Activated CD4-positive, alpha-beta T cell treated with anti-CD3 and anti-CD28 coated beads for 36 hours (primary cell): ENCODE measurements at regions of chr15 and their contacts with region 1.

Region 1: GRCh38 chr15:23411841-23412240 is 35.2 kb downstream of the GOLGA6L2 start:
- DNase-seq: no peak
- ATAC-seq: no peak
- H3K4me3 Mint-ChIP-seq: no peak overlapping the region
- H3K27ac Mint-ChIP-seq: no peak overlapping the region
- H3K4me1 Mint-ChIP-seq: no peaks in the 10 kb centered on the region
- H3K27me3 Mint-ChIP-seq: peaks cover 4% of the 10 kb centered on the region

Region 2: GRCh38 chr15:22989576-22990477 is 422.0 kb before region 1 on chr15:
- CTCF ChIA-PET with region 1: no interaction called
- POLR2A ChIA-PET with region 1: no interaction called
- intact Hi-C with region 1: no loop called
- DNase-seq: no peak
- ATAC-seq: no peak
- H3K4me3 Mint-ChIP-seq: no peak overlapping the region
- H3K27ac Mint-ChIP-seq: no peak overlapping the region
- H3K4me1 Mint-ChIP-seq: no peaks in the 10 kb centered on the region
- H3K27me3 Mint-ChIP-seq: no peaks in the 10 kb centered on the region

Region 3: DNA sequence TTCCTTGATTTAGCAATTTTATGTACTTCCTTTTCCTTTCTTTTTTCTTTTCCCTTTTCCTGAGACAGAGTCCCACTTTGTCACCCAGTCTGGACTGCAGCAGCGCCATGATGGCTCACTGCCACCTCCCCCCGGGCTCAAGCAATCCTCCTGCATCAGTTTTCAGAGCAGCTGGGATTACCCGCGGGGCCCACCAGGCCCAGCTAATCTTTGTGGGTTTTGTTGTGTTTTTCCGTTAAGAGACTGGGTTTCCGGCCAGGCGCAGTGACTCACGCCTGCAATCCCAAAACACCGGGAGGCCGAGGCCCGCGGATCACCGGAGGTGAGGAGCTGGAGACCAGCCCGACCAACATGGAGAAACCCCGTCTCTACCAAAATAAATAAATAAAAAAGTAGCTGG is 39.6 kb before region 1 on chr15:
- CTCF ChIA-PET with region 1: no interaction called
- POLR2A ChIA-PET with region 1: no interaction called
- intact Hi-C with region 1: loop called in 1 of 2 experiments (anchors 1 kb)
- DNase-seq: no peak
- ATAC-seq: no peak
- H3K4me3 Mint-ChIP-seq: no peak overlapping the region
- H3K27ac Mint-ChIP-seq: no peak overlapping the region
- H3K4me1 Mint-ChIP-seq: no peaks in the 10 kb centered on the region
- H3K27me3 Mint-ChIP-seq: no peaks in the 10 kb centered on the region